Activated T-helper 1 cell treated with anti-CD3 and anti-CD28 coated beads, Interleukin-12 subunit alpha, Interleukin-12 subunit beta, Interleukin-2, Interleukin-4 antibody, amounts not matched to agents 30 ng/mL and 10 ng/mL and 1 ng/mL, durations not matched to agents 14 hours and 24 hours and 36 hours (primary cell): ENCODE measurements at regions of chr12 and their contacts with region 1.

Region 1: DNA sequence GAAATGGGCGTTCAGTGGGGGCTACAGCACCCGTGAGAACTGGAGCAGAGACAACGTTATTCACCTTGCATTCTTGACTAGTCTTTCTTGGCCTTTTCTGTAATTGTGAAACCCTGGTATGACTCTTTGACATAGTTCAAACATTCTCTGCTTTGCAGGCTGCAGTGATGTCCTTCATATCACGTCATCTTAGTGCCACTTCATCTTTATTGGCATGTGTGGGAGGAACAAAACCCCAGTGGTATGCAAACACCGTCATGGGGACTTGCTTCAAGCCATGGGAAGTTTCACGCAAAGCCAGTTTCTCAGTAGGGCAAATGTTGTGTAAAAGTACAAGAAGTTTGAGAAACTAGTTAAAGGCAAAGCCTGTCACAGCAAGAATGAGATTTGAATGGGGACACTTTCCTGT is 20.2 kb upstream of the DUSP16 start:
- DNase-seq: peak; percentile 30
- H3K4me3 Mint-ChIP-seq: peak overlapping the region; percentile 21
- H3K27ac Mint-ChIP-seq: peak overlapping the region; percentile 88
- H3K4me1 Mint-ChIP-seq: peaks cover 45% of the 10 kb centered on the region
- H3K27me3 Mint-ChIP-seq: no peaks in the 10 kb centered on the region

Region 2: DNA sequence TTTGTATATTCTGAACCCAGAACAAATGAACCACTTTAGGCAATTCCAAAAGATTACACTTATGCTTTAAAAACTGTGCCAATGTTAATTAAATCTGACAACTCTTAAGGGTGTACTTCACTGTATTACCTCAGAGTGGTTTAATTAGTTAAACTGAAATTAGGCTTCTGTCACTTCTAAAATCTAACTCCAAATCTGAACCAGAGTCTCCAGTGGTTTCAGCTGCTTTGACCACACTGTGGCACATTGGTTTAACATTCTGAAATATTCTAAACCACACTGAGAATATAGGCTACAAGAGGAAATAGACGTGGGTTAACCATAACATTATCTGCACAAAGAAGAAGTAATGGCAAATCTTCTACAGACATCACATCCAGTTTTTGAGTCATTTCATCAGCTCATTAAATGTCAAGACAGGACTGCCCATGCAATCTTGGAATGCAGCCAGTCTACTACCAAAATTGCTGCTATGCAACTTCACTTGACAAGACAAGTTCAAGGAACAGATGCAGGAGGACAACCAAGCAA is 410.8 kb before region 1 on chr12:
- intact Hi-C with region 1: loop called (anchors 2 kb)
- DNase-seq: peak; percentile 12
- H3K4me3 Mint-ChIP-seq: no peak overlapping the region
- H3K27ac Mint-ChIP-seq: peak overlapping the region; percentile 42
- H3K4me1 Mint-ChIP-seq: peaks cover 15% of the 10 kb centered on the region
- H3K27me3 Mint-ChIP-seq: peaks cover 60% of the 10 kb centered on the region

Region 3: GRCh38 chr12:12474931-12475795 is 107.7 kb before region 1 on chr12:
- intact Hi-C with region 1: loop called (anchors 1 kb)
- DNase-seq: peak; percentile 66
- H3K4me3 Mint-ChIP-seq: peak overlapping the region; percentile 60
- H3K27ac Mint-ChIP-seq: peak overlapping the region; percentile 99
- H3K4me1 Mint-ChIP-seq: peaks cover 68% of the 10 kb centered on the region
- H3K27me3 Mint-ChIP-seq: no peaks in the 10 kb centered on the region

Region 4: GRCh38 chr12:12546314-12546772 is 36.6 kb before region 1 on chr12:
- intact Hi-C with region 1: no loop called
- DNase-seq: no peak
- H3K4me3 Mint-ChIP-seq: no peak overlapping the region
- H3K27ac Mint-ChIP-seq: no peak overlapping the region
- H3K4me1 Mint-ChIP-seq: peaks cover 31% of the 10 kb centered on the region
- H3K27me3 Mint-ChIP-seq: no peaks in the 10 kb centered on the region

Region 5: GRCh38 chr12:12562585-12563261 is 20.2 kb before region 1 on chr12 and contains the start of gene DUSP16:
- intact Hi-C with region 1: loop called (anchors 1 kb)
- DNase-seq: peak; percentile 85
- H3K4me3 Mint-ChIP-seq: peak within 1 kb of the TSS; percentile 88
- H3K27ac Mint-ChIP-seq: peak within 1 kb of the TSS; percentile 97
- H3K4me1 Mint-ChIP-seq: peaks cover 52% of the 10 kb centered on the region
- H3K27me3 Mint-ChIP-seq: no peaks in the 10 kb centered on the region
- total RNA-seq, gene DUSP16: 49.3 and 52.0 TPM in 2 replicates

Region 6: DNA sequence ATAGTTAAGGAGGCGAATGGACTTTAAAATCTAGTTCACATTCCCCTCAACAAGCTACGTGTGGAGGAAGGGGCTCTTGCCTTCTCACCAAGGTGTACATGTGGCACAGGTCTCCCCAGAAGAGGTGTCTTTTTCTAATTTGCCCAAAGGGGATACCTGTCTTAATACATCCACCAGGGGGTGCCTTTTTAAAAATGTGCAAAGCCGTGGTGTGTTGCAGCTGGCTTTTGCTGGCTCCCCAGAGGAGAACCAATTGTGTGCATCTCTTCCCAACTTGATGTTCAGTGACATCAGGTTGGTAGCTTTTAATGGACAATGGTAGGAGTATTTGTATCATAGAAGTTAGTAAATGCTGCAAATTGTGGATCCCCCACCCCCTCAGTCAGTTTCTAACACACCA is 62.6 kb after region 1 on chr12:
- intact Hi-C with region 1: loop called (anchors 2 kb)
- DNase-seq: peak; percentile 26
- H3K4me3 Mint-ChIP-seq: no peak overlapping the region
- H3K27ac Mint-ChIP-seq: peak overlapping the region; percentile 61
- H3K4me1 Mint-ChIP-seq: peaks cover 12% of the 10 kb centered on the region
- H3K27me3 Mint-ChIP-seq: no peaks in the 10 kb centered on the region

Region 7: GRCh38 chr12:12724661-12725545 is 142.0 kb after region 1 on chr12:
- intact Hi-C with region 1: loop called (anchors 1 kb)
- DNase-seq: peak; percentile 88
- H3K4me3 Mint-ChIP-seq: peak overlapping the region; percentile 90
- H3K27ac Mint-ChIP-seq: peak overlapping the region; percentile 96
- H3K4me1 Mint-ChIP-seq: peaks cover 56% of the 10 kb centered on the region
- H3K27me3 Mint-ChIP-seq: peaks cover 3% of the 10 kb centered on the region

Region 8: GRCh38 chr12:12757121-12757520 is 174.2 kb after region 1 on chr12:
- intact Hi-C with region 1: no loop called
- DNase-seq: no peak
- H3K4me3 Mint-ChIP-seq: no peak overlapping the region
- H3K27ac Mint-ChIP-seq: no peak overlapping the region
- H3K4me1 Mint-ChIP-seq: no peaks in the 10 kb centered on the region
- H3K27me3 Mint-ChIP-seq: no peaks in the 10 kb centered on the region